WTC11 (cell line): ENCODE measurements at regions of chr3 and their contacts with region 1.

Region 1: DNA sequence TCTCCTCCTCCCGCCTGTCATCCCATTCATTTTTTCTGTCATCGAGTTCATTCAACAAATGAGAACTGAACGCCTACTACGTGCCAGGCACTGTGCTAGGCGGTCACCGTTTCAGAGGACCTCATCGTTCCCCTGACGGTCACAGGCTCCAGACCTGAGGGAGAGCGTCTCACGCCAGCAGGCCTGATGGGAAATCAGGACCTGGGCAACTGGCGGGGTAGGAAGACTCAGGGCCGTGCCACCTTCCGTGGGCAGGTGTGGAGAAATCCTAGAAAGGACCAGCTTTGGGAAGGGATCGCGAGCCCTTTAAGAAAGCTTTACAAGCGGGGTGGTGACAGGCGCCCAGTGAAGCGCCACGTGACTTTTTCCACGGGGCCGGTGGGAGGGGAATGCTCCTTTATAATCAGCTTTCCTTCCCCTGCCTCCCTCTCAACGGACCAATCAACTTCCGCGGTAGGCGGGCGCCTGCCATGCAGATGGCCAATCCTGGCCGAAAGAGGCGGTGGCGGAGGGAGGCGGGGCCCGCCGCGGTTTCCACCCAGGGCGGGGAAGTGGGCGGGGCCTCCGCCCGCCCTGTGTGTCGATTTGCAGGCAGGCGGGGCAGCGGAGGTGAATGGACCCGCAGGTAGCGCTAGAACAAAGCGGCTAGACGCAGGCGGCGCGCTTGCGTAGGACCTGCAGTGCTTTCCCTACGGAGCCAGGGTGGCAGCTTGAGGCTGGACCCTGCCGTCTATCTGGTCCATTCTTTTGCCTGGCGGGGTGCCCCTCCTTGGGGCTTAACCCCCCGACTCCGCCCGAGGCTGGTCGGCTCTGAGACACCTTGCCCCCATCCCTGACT is 816 bp upstream of the DUSP7 start:
- DNase-seq: peak; percentile 99
- ATAC-seq: peak; percentile 77
- H3K4me3 Mint-ChIP-seq: peak overlapping the region; percentile 83
- H3K27ac Mint-ChIP-seq: peak overlapping the region; percentile 94
- H3K4me1 Mint-ChIP-seq: peaks cover 30% of the 10 kb centered on the region
- H3K27me3 Mint-ChIP-seq: peaks cover 21% of the 10 kb centered on the region
- CTCF ChIP-seq: no peak

Region 2: GRCh38 chr3:51777985-51778384 is 279.2 kb before region 1 on chr3:
- CTCF ChIA-PET with region 1: no interaction called
- POLR2A ChIA-PET with region 1: no interaction called
- DNase-seq: no peak
- ATAC-seq: no peak
- H3K4me3 Mint-ChIP-seq: no peak overlapping the region
- H3K27ac Mint-ChIP-seq: no peak overlapping the region
- H3K4me1 Mint-ChIP-seq: peaks cover 11% of the 10 kb centered on the region
- H3K27me3 Mint-ChIP-seq: no peaks in the 10 kb centered on the region; the same call in 1 of the 2 replicates
- CTCF ChIP-seq: no peak

Region 3: DNA sequence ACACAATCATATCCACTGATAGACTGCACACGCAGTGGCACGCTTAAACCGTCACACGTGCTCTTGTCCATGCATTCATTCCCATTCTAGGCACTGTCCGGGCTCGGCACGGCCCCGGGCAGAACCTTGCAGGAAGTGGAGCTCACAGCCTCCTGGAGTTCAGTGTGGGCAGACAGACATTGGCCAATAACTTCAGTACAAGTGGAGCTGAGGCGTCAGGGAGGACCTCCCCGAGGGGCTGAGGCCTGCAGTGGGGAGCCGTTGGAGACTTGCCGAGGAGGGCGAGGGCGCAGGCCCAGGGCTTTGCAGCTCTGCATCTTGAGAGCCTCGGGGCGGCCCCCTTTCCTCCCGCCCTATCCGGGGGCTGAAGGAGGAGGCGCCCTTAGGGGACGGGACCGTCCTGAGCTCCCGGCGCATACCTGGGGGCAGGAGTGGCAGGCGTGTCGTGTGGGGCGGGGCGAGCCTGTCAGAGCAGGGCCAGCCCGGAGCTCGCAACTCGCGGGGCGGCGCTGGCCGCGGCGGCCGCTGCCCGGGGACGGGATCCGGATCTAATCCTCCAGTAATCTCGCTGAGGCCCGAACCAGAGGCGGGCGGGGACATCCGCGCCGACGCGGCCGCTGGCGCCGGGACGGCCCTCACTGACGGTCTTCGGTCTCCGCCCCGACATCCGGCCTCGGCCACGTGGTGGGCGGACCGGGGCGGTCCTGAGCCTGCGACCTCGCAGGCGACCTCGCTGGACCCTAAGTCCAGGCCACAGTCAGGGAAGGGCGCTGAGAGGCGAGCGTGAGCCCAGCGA is 74.2 kb before region 1 on chr3 and contains the start of gene ACY1:
- CTCF ChIA-PET with region 1: interaction called, 26 read pairs
- POLR2A ChIA-PET with region 1: no interaction called
- DNase-seq: peak; percentile 85
- ATAC-seq: peak; percentile 78
- H3K4me3 Mint-ChIP-seq: peak within 1 kb of the TSS; percentile 84
- H3K27ac Mint-ChIP-seq: peak within 1 kb of the TSS; percentile 96
- H3K4me1 Mint-ChIP-seq: peaks cover 21% of the 10 kb centered on the region
- H3K27me3 Mint-ChIP-seq: peaks cover 3% of the 10 kb centered on the region; the same call in 1 of the 2 replicates
- CTCF ChIP-seq: 0 out of 2 replicates have a peak, but pooled peaks have one; percentile 1
- total RNA-seq, gene ACY1: 53.8 to 66.3 TPM (median 61.6 TPM) in 3 replicates

Region 4: DNA sequence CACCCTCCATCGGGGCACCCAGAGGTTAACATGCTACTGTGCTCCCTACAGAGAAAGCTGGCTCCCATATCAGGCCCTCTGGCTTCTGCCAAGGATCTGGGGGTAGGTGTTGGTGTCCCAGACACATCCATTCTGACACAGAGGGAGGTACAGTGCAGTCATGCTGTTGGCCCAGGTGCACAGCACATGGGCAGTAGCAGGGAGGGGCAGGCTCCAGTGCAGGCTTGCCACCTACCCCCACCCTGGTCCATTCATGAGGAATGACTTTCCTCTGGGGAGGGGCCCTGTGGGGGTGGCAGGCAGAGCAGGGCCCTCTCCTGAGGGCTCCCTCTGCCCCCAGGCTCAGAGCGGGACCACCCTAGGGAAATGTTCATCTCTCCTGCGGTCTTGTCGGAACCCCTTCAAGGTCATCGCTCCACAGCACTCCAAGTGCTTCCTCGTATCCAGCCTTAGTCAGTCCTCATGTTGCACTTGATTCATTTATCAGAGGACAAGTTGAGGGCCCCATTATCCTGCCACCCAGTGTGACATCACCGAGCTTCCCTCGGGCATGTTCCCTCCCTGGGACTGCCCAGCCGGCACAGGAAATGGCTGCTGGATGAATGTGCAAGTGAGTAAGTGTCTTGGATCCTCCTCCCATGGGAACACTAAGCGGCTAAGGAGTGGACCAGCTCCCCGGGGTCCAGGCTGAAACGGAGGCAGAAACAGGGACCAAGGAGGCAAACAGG is 10.8 kb before region 1 on chr3:
- CTCF ChIA-PET with region 1: interaction called, 58 read pairs
- POLR2A ChIA-PET with region 1: interaction called, 4 read pairs
- DNase-seq: no peak
- ATAC-seq: no peak
- H3K4me3 Mint-ChIP-seq: no peak overlapping the region
- H3K27ac Mint-ChIP-seq: peak overlapping the region; percentile 89
- H3K4me1 Mint-ChIP-seq: peaks cover 11% of the 10 kb centered on the region
- H3K27me3 Mint-ChIP-seq: no peaks in the 10 kb centered on the region
- CTCF ChIP-seq: no peak

Region 5: DNA sequence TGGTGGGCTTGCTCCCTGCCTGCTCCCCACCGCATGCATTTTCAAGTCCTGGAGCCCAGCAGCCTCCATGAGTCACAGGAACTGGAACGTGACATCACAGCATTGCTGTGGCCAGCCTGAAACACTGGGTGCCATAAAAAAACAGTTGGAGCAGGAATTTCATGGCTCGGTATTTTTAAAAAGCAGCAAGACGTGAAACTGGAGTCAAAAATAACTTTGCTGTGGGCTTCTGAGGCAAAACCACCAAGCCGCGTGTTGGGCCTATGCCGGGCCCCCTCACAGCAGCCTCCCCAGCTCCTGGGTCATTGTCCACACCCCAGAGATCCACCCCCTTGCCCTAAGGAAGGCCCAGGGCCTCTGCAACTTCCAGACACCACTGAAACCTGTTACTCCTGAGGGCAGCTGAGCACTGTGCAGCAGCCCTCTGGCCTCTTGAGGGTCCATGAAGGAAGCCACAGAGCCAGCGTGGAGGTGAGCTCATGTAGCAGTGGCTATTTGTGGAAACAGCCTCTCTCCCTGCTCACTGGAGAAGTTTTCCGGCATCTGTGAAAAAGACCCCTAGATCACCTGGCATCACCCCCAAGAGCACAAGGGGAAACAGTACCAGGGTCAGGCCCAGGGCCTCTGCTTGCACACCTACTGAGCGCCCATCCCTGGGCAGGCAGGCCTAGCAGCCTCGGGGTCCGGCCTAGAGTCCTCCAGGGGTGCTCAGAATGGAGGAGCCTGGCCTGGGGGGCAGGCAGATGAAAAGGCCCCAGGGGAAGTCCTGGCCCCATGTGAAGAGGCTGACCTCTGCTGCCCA is 33.1 kb after region 1 on chr3:
- CTCF ChIA-PET with region 1: interaction called, 17 read pairs
- POLR2A ChIA-PET with region 1: interaction called, 4 read pairs
- DNase-seq: no peak
- ATAC-seq: no peak
- H3K4me3 Mint-ChIP-seq: no peak overlapping the region
- H3K27ac Mint-ChIP-seq: no peak overlapping the region; the same call in 1 of the 2 replicates
- H3K4me1 Mint-ChIP-seq: no peaks in the 10 kb centered on the region
- H3K27me3 Mint-ChIP-seq: no peaks in the 10 kb centered on the region
- CTCF ChIP-seq: no peak

Region 6: GRCh38 chr3:52144034-52144795 is 87.0 kb after region 1 on chr3:
- CTCF ChIA-PET with region 1: interaction called, 14 read pairs
- POLR2A ChIA-PET with region 1: no interaction called
- DNase-seq: peak; percentile 87
- ATAC-seq: peak; percentile 93
- H3K4me3 Mint-ChIP-seq: no peak overlapping the region
- H3K27ac Mint-ChIP-seq: peak overlapping the region; percentile 41; the same call in 1 of the 2 replicates
- H3K4me1 Mint-ChIP-seq: peaks cover 5% of the 10 kb centered on the region
- H3K27me3 Mint-ChIP-seq: no peaks in the 10 kb centered on the region
- CTCF ChIP-seq: peak; percentile 98